ENCODE measurements at regions of chr20 and their contacts with region 1.

Region 1: DNA sequence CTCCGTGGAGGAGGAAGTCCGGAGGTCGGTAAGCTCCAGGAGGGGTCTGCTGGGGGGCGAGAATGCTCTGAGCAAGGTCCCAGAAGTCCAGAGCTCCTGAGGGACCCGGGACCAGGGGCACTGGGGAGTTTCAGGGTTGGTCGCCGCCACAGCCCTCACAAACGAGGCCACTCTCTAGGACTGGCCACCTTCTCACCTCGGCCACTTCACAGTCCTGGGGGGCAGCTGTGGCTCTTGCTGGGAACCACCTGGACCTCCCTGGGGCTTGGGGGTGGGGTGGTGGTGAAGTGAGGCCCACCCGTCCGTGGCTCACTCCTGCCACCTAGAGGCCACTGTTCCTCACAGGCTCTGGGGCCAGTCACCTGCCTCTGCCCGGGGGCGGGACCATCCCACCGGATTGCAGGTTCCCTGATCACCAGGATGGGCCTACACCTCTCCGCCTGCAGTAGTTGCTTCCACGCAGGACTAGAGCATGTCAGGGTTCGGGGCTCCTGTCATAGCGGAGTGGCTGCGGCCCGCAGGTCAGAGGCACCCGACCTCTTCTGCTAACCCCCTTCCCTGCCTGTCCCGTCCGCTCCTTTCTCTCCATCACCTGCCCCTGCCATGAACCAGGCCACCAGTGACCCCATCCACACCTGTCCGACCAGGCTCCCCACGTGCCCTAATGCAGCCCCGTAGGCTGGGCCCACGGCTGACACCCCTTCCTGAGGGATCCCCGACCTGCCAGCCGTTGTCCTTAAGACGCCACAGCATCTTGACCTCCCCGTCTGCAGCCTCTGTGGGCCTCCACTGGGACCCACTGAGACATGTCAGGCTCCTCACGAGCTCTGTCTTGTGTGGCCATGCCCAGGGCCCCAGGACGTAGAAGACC is 5.1 kb upstream of the TCEA2 start:
- DNase-seq: no peak
- ATAC-seq: peak; percentile 87
- H3K4me3 ChIP-seq: no peak overlapping the region
- H3K27ac ChIP-seq: no peak overlapping the region; the same call in 1 of the 2 replicates
- H3K4me1 ChIP-seq: peaks cover 12 to 42% of the 10 kb centered on the region in 2 experiments; a peak in 3 of 4 replicates
- H3K27me3 ChIP-seq: no peaks in the 10 kb centered on the region
- CTCF ChIP-seq: peak in 2 of 3 experiments; percentile 85 to 93; a peak in 4 of 6 replicates
- POLR2A ChIP-seq: no peak
- RAD21 ChIP-seq: no peak

Region 2: DNA sequence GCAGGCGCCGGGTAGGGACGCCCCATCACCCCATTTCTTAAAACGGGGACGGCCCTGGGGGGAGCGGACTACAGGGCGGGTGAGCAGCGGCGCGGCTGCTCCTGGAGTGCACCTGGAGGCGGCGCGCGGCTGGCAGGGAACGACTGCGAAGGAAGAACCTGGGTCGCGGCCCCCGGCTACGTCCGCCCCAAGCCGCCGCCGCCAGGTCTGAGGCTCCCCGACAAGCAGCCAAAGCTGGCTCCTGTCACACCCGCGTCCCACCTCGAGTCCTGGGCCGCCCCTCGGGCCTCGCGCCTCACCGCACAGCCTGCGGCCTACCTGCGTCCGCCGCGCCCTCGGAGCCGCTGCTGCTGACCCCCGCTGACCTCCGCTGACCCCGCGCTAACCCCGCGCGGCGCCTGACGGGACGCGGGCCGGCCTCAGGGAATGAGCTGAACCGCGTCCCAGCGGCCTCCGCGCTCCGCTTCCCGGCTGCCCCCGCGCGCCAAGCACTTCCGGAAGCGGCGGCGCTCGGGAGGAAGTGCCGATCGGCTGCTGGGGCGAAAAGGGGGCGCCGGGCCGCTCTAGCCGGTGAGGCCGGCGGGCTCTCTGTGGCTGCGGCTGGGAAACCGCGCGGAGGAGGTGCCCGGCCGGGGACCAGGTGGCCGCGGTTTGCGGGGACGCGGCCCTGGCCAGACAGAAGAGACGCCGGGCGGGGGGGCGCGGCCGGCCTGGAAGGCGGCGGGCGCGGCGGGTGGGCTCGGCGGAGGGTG is 350.1 kb before region 1 on chr20 and contains the starts of genes ARFRP1 and ZGPAT:
- CTCF ChIA-PET with region 1: no interaction called
- POLR2A ChIA-PET with region 1: no interaction called
- RAD21 ChIA-PET with region 1: no interaction called
- intact Hi-C with region 1: loop called (anchors 10 kb)
- DNase-seq: peak; percentile 47
- ATAC-seq: peak; percentile 85
- H3K4me3 ChIP-seq: peak within 1 kb of the TSS; percentile 85 to 96
- H3K27ac ChIP-seq: peak within 1 kb of the TSS; percentile 95
- H3K4me1 ChIP-seq: peaks cover 13 to 23% of the 10 kb centered on the region in 2 experiments
- H3K27me3 ChIP-seq: no peaks in the 10 kb centered on the region
- CTCF ChIP-seq: no peak
- POLR2A ChIP-seq: peak; percentile 53
- RAD21 ChIP-seq: no peak
- total RNA-seq, gene ARFRP1: 53.7 TPM
- total RNA-seq, gene ZGPAT: 30.6 TPM